Activated CD4-positive, alpha-beta memory T cell treated with anti-CD3 and anti-CD28 coated beads for 36 hours (primary cell): ENCODE measurements at regions of chr9 and their contacts with region 1.

Region 1: DNA sequence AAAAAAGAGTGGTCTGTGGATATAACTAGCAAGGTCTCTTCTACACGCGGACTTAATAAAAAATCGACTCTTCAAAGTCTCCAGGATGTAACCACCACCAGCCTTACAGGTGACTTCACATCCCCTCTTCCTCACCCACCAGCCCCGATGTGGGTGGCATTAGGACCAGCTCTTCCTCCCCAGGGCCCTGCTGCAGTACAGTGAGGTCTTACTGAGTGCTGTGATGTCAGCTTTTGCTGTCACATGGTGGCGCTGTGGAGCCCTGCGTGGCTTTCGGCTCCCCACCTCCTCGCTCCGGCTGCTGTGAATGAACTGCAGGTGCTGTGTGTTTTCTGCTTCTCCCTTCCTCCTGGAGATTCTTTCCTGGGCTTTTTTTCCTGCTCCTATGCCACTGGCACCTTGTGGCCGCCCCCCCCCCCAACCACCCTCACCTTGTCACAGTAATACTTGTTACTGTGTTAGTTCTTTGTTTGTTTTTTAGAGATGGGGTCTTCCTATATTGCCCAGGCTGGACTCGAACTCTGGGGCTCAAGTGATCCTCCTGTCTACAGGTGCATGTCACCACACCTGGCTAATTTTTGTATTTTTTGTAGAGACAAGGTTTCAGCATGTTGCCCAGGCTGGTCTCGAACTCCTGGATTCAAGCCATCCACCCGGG is 15.8 kb upstream of the RAPGEF1 start:
- DNase-seq: peak; percentile 92
- H3K4me3 Mint-ChIP-seq: peak overlapping the region; percentile 27
- H3K27ac Mint-ChIP-seq: peak overlapping the region; percentile 57
- H3K4me1 Mint-ChIP-seq: peaks cover 18% of the 10 kb centered on the region
- H3K27me3 Mint-ChIP-seq: peaks cover 8% of the 10 kb centered on the region

Region 2: DNA sequence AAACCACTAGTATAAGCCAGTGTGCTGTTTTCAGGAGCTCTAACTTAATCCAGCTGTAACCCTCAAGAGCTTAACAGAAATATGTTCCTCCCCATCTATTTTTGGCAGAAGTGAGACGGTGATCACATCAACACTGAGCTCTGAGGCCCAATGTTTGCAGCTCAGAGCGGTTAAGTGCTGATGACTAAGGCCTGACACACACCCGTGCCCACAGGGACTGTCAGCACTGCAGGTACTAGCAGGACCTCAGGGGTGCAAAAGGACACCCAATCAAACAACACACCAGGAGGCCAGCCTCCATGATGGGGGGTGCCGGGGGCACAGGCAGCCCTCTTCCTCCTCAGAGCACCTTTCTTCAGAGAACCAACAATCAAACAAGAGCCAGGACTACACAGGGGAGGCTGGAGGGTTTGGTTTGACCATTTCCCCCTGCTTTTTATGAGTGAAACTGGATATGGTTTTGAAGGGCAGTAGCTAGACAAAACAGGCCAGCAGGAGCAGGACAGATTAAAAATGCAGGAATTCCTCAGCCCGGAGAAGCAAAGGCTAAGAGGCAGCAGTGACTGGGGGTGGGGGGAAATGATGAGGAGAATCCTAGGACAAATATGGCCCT is 77.1 kb before region 1 on chr9:
- CTCF ChIA-PET with region 1: no interaction called
- POLR2A ChIA-PET with region 1: no interaction called
- intact Hi-C with region 1: no loop called
- DNase-seq: peak; percentile 92
- H3K4me3 Mint-ChIP-seq: peak overlapping the region; percentile 83
- H3K27ac Mint-ChIP-seq: peak overlapping the region; percentile 99
- H3K4me1 Mint-ChIP-seq: peaks cover 92% of the 10 kb centered on the region
- H3K27me3 Mint-ChIP-seq: no peaks in the 10 kb centered on the region

Region 3: GRCh38 chr9:131954299-131954698 is 198.6 kb after region 1 on chr9:
- CTCF ChIA-PET with region 1: interaction called, 4 read pairs
- POLR2A ChIA-PET with region 1: no interaction called
- intact Hi-C with region 1: loop called (anchors 5 kb)
- DNase-seq: no peak
- H3K4me3 Mint-ChIP-seq: no peak overlapping the region
- H3K27ac Mint-ChIP-seq: no peak overlapping the region
- H3K4me1 Mint-ChIP-seq: no peaks in the 10 kb centered on the region
- H3K27me3 Mint-ChIP-seq: no peaks in the 10 kb centered on the region

Region 4: GRCh38 chr9:131999692-132000551 is 244.3 kb after region 1 on chr9:
- CTCF ChIA-PET with region 1: interaction called, 3 read pairs
- POLR2A ChIA-PET with region 1: no interaction called
- intact Hi-C with region 1: loop called (anchors 5 kb)
- DNase-seq: no peak
- H3K4me3 Mint-ChIP-seq: no peak overlapping the region
- H3K27ac Mint-ChIP-seq: peak overlapping the region; percentile 38
- H3K4me1 Mint-ChIP-seq: peaks cover 39% of the 10 kb centered on the region
- H3K27me3 Mint-ChIP-seq: no peaks in the 10 kb centered on the region